ENCODE measurements at regions of chrX and their contacts with region 1.

Region 1: DNA sequence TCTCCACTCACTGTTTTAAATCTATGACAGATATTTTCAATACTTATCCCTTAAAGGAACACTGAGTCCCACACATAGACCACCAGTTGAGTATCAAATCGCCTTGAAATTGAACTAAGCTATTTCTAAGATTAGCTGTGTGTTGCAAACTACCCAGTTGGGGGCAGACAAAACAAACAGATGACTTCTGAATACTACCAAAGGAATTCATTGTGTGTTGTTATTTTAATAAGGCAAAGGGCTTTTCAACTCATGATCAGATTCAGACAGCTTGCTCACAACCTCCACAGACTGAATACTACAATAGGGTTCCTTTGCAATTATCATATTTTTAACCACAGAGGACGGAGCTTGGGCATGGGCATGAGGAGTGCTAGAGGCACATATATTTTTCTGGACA is 283.0 kb upstream of the GPC4 start:
- DNase-seq: peak; percentile 60
- ATAC-seq: peak; percentile 83
- H3K4me3 ChIP-seq: no peak overlapping the region
- H3K27ac ChIP-seq: no peak overlapping the region
- H3K4me1 ChIP-seq: peaks cover 17% of the 10 kb centered on the region; the same call in 1 of the 2 replicates
- H3K27me3 ChIP-seq: no peaks in the 10 kb centered on the region
- CTCF ChIP-seq: peak; percentile 68

Region 2: DNA sequence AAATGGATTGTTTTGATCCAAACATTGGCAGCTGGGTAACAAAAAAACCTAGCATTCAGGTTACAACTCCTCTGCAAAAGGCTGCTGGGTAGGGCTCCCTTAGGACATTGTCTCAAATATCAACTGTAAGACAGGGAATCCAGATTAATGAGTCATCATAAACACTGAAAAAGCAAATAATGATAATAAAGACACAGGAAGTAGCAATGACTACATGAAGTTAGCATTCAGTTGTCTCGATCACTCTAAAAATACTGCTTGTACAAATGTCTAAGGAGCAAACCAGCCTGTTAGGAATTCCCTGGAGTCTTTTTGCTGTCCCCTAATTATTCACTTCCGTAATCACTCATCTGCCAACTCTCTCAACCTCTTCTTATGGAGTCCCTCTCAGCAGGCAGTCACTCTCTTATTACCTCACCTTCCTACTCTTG is 27.9 kb after region 1 on chrX:
- CTCF ChIA-PET with region 1: no interaction called
- POLR2A ChIA-PET with region 1: no interaction called
- intact Hi-C with region 1: loop called (anchors 2 kb)
- DNase-seq: peak; percentile 93
- ATAC-seq: peak; percentile 95
- H3K4me3 ChIP-seq: peak overlapping the region; percentile 25; the same call in 1 of the 2 replicates
- H3K27ac ChIP-seq: peak overlapping the region; percentile 97
- H3K4me1 ChIP-seq: peaks cover 20% of the 10 kb centered on the region
- H3K27me3 ChIP-seq: no peaks in the 10 kb centered on the region
- CTCF ChIP-seq: no peak

Region 3: GRCh38 chrX:133776072-133776471 is 77.8 kb after region 1 on chrX:
- CTCF ChIA-PET with region 1: interaction called, 6 read pairs
- POLR2A ChIA-PET with region 1: no interaction called
- intact Hi-C with region 1: loop called (anchors 1 kb)
- DNase-seq: peak; percentile 49
- ATAC-seq: 0 out of 2 replicates have a peak, but pooled peaks have one; percentile 24
- H3K4me3 ChIP-seq: no peak overlapping the region
- H3K27ac ChIP-seq: no peak overlapping the region
- H3K4me1 ChIP-seq: no peaks in the 10 kb centered on the region
- H3K27me3 ChIP-seq: no peaks in the 10 kb centered on the region
- CTCF ChIP-seq: peak; percentile 71

Region 4: DNA sequence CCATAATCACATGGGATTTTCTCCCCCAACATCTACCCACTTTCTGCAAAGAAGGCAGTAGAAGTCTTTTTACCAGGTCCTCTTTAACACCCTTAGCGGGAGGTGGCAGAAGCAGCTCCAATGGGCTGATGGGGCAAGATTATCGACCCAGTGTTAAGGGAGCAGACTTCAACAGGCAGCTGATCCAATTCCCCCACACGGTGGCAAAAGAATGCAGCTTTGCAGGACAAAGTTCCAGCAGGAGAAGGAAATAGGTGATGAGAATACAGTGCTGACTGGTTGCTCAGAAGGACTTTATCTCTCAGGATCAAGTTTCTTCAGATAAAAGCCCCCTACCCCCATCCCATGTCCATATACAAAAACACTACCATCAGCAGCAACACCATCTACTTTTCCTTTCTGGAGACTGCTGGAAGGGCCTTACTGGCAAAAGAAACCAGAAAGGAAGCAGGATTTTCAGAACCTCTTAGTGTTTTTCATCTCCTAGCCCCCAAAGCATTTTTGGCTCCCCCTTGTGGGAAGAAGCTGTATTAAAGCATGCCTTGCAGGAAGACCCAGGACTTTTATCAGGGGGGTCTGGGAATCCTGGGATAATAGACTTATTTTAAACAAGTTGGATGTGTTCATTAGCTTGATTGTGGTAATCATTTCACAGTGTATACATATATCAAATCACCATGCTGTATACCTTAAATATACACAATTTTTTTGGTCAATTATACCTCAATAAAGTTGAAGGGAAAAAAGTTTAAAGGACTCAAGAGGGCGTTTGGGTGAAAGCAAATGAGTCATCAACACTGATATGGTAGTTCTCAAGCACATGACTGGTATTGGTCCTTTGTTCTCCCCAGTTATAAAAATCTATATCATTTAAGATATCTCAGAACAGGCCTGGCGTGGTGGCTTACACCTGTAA is 140.7 kb after region 1 on chrX:
- CTCF ChIA-PET with region 1: no interaction called
- POLR2A ChIA-PET with region 1: no interaction called
- intact Hi-C with region 1: loop called (anchors 1 kb)
- DNase-seq: peak; percentile 67
- ATAC-seq: peak; percentile 33; the same call in 1 of the 2 replicates
- H3K4me3 ChIP-seq: no peak overlapping the region
- H3K27ac ChIP-seq: no peak overlapping the region
- H3K4me1 ChIP-seq: no peaks in the 10 kb centered on the region
- H3K27me3 ChIP-seq: peaks cover 25% of the 10 kb centered on the region
- CTCF ChIP-seq: peak; percentile 65

Measured in PC-3 (cell line).